ENCODE measurements at regions of chr2 and their contacts with region 1.

Region 1: GRCh38 chr2:104849618-104850141 is 4.2 kb upstream of the POU3F3 start:
- DNase-seq: peak; percentile 8
- H3K4me3 ChIP-seq: no peak overlapping the region
- H3K27ac ChIP-seq: no peak overlapping the region
- H3K27me3 ChIP-seq: peaks cover 68% of the 10 kb centered on the region
- CTCF ChIP-seq: peak; percentile 74

Region 2: DNA sequence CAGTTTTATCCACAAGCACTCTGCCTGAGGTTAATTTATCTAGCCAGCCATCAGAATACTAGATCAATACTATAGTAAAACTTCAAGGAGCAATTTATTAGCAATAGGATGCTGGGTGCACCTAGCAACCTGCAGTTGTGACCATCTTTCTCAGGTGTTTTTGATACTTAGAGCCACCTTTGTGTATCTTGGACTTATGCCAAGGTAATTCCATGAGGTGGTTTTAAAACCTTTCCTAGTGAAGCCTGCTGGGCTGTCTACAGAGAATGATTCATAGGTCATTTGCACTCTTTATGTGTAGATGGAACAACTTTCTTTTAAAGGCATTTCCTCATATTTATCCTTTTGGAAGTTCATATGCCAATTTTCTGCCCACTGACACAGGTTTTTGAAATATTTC is 1025.9 kb before region 1 on chr2:
- CTCF ChIA-PET with region 1: no interaction called
- POLR2A ChIA-PET with region 1: no interaction called
- DNase-seq: no peak
- H3K4me3 ChIP-seq: no peak overlapping the region
- H3K27ac ChIP-seq: no peak overlapping the region
- H3K27me3 ChIP-seq: no peaks in the 10 kb centered on the region
- CTCF ChIP-seq: no peak

Region 3: DNA sequence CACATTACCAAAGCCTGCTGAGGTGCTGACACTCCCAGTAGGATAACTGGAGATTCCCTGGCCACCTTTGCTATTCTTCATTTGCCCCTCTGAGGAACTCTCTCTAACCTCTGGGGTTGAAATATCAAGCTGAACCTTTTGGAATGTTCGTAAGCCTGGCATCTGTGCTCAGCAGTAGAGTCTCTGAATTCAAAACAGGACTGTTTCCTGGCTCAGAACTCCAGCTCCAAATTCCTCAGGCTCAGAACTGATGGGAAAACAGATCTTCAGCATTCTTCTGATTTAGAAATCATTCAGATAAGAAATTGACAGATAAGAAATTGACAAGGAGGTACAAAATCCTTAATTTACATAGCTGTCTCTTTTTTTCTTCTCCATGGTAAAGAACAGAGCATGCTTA is 17.9 kb before region 1 on chr2:
- CTCF ChIA-PET with region 1: interaction called, 17 read pairs
- POLR2A ChIA-PET with region 1: no interaction called
- DNase-seq: no peak
- H3K4me3 ChIP-seq: no peak overlapping the region
- H3K27ac ChIP-seq: no peak overlapping the region
- H3K27me3 ChIP-seq: no peaks in the 10 kb centered on the region
- CTCF ChIP-seq: no peak

Region 4: GRCh38 chr2:104836841-104837240 is 12.8 kb before region 1 on chr2:
- CTCF ChIA-PET with region 1: interaction called, 17 read pairs
- POLR2A ChIA-PET with region 1: no interaction called
- DNase-seq: no peak
- H3K4me3 ChIP-seq: no peak overlapping the region
- H3K27ac ChIP-seq: no peak overlapping the region
- H3K27me3 ChIP-seq: no peaks in the 10 kb centered on the region
- CTCF ChIP-seq: no peak

Region 5: DNA sequence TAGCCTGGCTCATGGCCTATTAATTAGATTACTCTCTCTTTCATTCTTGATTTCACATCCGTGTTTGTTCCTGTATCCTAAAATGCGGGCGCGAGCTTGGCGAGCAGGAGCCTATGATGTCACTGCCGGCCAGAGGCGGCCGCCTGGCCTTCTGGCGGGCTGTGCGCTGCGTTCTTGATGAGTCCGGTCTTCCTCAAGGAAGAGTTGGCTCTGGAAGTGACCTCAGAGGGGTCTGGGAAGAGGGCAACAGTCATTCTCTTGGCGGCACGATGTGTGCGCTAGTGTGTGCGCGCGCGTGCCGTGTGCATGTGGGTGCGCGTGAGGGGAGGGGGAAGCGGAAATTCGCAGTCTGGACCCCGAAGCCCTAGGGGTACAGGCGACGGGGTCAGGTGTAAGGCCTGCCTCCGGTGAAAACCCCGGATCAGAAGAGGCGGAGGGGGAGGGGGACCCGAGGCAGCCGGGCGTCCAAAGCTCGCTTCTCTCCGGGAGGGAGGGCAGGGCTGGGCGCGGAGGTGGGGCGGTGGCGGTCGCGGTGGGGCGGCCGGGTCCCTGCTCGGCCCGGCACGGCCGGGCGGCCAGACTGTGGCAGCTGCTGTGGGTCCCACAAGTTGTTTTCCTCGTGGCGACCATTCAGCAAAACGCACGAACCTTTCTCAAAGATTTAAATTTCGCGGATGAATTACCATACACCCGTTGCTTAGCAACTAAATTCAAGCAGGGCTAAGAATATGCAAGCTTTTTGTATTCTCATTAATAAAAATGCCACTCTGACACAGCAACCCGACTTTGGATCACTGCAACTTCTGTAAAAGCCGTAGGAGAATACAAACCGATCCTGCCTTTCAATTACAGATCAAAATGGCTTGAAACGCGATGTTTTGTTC is 12.6 kb after region 1 on chr2:
- CTCF ChIA-PET with region 1: interaction called, 20 read pairs
- POLR2A ChIA-PET with region 1: no interaction called
- DNase-seq: no peak
- H3K4me3 ChIP-seq: no peak overlapping the region
- H3K27ac ChIP-seq: no peak overlapping the region
- H3K27me3 ChIP-seq: peaks cover 76% of the 10 kb centered on the region
- CTCF ChIP-seq: no peak